Psoas muscle (tissue), 8 donors: ENCODE measurements at regions of chr10 and their contacts with region 1.

Region 1: DNA sequence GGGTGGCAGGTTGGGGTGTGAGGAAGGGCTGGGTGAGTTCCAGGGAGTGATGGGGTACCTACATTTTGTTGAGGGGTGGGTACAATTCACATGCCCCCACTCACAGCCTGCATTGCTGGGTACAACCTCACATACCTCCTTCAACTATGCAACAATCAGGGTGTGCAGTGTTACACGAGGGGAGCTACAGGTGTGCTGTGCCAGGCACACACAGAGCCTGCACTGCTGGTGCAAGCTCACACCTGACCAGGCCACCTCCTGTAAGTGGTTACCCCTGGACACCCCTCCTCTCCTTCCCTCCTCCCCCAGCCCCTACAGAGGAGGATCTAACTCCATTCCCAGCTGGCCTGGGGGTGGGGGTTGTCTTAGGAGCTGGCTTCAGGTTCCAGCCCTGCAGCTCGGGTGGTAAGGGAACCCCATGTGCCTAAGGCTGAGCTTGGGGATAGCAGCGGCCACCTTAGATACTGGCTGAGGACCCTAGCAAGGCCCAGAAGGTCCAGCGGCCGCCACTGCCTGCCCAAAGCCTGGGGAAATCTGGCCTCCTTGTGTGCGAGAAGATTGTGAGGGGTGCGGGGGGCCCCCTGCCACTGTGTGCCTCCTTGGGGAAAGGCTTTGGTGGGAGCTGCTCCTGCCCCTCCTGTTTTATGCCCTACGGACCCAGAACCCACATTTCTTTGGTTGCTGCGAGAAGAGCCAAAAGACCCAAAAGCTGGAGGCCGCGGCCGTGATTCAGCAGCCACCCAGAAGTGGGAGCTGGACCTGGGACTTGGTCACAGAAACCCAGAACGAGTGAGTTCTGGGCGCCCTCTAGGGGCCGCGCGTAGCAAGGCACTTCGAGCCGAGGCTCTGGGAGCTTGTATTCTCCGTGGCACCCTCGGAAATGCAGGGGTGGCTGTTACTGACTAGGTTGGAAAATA is 10.8 kb downstream of the TLX1 start:
- DNase-seq: peak; percentile 78 to 89
- ATAC-seq: peak; percentile 88 to 95 (median 92)
- H3K4me3 ChIP-seq: no peak overlapping the region
- H3K27ac ChIP-seq: no peak overlapping the region
- H3K4me1 ChIP-seq: peaks cover 17% of the 10 kb centered on the region
- H3K27me3 ChIP-seq: peaks cover 0 to 96% (median 46%) of the 10 kb centered on the region in 3 donors
- CTCF ChIP-seq: peak; percentile 96

Region 2: GRCh38 chr10:100775386-100775785 is 366.5 kb before region 1 on chr10:
- intact Hi-C with region 1: no loop called
- DNase-seq: peak in 1 of 2 donors; percentile 39
- ATAC-seq: peak in 1 of 4 donors; percentile 27
- H3K4me3 ChIP-seq: no peak overlapping the region
- H3K27ac ChIP-seq: no peak overlapping the region
- H3K4me1 ChIP-seq: no peaks in the 10 kb centered on the region
- H3K27me3 ChIP-seq: peaks cover 0 to 35% (median 7%) of the 10 kb centered on the region in 3 donors
- CTCF ChIP-seq: no peak

Region 3: GRCh38 chr10:101080933-101081931 is 60.6 kb before region 1 on chr10:
- intact Hi-C with region 1: no loop called
- DNase-seq: no peak
- ATAC-seq: no peak
- H3K4me3 ChIP-seq: no peak overlapping the region
- H3K27ac ChIP-seq: no peak overlapping the region
- H3K4me1 ChIP-seq: no peaks in the 10 kb centered on the region
- H3K27me3 ChIP-seq: peaks cover 0 to 67% (median 0%) of the 10 kb centered on the region in 3 donors
- CTCF ChIP-seq: no peak

Region 4: DNA sequence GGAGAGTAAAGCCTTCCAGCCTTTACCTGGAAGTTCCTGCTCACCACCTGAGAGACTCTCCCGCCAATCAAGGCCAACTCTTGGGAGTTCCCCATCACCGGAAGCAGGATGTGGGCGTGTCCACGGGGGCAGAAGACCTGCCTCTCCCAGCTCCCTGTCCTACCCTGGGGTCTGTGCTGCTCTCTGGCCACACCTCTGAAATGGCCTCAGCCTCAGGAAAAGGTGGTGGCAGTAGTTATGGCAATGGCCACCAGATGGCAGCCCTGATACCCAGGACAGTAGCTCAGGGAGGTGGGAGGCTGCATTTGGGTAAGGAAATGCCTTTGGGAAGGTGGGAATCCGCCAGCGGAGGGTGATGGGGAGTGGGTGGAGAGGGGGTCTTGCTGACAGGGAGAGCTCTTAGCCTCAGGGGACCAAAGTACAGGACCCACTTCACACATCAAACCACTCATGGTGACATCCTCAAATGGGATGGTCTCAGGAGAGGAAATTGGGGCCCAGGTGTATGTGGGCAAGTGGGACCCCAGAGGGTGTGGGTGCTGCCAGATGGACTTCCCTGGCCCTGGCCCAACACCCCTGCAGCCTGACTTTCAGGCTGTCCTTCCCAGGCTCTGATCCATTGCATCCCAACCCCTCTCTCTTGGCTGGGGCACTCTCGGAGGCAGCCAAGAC is 46.2 kb before region 1 on chr10:
- intact Hi-C with region 1: loop called (anchors 1 kb)
- DNase-seq: peak; percentile 60 to 77
- ATAC-seq: peak; percentile 80 to 92 (median 86)
- H3K4me3 ChIP-seq: no peak overlapping the region
- H3K27ac ChIP-seq: no peak overlapping the region
- H3K4me1 ChIP-seq: no peaks in the 10 kb centered on the region
- H3K27me3 ChIP-seq: peaks cover 3 to 55% (median 13%) of the 10 kb centered on the region in 3 donors
- CTCF ChIP-seq: peak; percentile 74

Region 5: DNA sequence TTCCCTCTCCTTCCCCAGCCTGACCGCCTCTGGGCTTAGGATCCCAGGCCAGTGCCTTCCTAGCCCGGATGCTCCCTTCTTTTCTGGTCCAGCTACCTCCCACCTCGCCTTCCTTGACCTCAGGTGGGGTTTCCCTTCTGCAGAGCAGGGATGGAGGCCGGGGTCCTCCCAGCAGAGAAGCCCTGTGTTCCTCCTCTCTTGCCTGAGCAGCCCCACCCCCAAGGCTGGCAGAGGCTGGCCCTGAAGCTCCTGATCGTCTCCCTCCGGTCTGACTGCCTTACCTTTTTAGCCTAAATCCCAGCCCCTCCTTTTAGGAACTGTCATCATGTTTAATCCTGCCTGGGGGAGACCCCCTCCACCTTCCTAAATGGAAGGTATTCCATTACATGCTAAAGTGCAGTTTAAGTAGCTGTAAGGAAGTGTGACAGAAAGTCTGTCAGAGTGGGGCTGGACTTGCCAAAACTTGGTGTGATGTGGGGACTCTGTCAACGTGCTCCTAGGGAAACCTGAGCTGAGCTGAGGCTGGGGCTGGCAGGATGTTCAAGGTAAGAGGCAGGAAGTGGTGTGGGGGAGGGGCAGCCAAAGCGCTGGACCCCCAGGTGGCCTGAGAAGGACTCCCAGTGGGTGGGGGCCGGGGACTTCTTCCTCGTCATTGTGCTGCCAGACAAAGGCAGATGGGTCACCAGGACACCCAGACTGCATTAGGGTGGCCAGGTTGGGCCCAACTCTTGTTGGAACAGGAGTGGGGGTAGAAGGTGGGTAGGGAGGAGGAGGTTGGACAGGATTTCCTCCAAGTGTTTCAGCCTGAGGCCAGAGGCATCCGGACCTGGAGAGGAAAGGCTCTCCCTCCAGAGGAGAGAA is 47.9 kb after region 1 on chr10:
- intact Hi-C with region 1: no loop called
- DNase-seq: no peak
- ATAC-seq: no peak
- H3K4me3 ChIP-seq: no peak overlapping the region
- H3K27ac ChIP-seq: no peak overlapping the region
- H3K4me1 ChIP-seq: no peaks in the 10 kb centered on the region
- H3K27me3 ChIP-seq: no peaks in the 10 kb centered on the region
- CTCF ChIP-seq: no peak